OCI-LY7 (cell line): ENCODE measurements at regions of chr6 and their contacts with region 1.

Region 1: DNA sequence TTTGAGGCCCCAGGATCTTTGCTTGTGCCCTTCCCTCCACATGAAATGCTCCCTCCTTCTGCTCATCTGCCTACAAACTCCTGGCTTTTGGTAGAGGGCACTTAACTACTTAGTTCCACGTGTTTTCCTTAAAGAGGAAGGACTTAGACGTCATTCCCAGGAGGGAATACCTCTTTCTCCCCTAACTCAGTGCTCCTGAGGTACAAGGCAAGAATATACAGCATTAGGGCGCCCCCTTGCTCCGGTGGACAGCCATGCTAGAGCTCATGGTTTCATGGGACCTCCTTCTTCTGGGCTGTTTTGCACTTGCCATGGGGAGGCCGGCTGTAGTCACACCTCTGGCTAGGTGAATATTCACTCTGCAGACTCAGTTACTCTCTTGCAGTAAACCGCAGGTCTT is 93.8 kb upstream of the LY86 start:
- DNase-seq: peak; percentile 85
- H3K4me3 ChIP-seq: no peak overlapping the region
- H3K27ac ChIP-seq: peak overlapping the region; percentile 55
- H3K4me1 ChIP-seq: peaks cover 24% of the 10 kb centered on the region
- CTCF ChIP-seq: peak; percentile 99

Region 2: DNA sequence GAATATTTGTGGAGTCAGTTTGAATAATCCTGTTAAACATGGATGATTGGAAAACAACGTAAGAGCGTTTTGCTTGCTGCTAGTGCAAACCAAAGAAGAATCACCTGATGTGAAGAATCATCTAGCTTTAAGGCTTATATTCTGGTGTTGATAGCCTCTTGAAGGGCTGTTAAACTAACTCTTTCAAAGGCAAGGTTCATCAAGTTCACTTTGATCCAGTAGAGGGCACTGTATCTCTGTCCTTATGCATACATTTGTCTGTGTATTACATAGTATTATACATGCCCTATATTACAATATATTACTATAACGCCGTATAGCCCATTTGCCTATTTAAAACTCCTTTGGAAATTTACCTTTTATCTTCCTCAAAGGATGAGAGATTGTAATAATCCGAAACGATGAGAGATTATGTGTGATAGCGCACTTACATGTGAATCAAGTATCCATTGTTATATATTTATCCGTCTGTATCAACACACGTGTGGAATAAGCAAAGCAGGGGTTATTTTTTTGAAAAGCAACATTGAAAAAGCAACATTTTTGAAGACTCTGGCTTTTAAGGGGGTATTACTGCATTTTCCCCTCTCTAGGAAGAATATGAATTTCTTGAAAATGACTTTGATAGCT is 437.1 kb before region 1 on chr6:
- CTCF ChIA-PET with region 1: interaction called, 6 read pairs
- POLR2A ChIA-PET with region 1: no interaction called
- intact Hi-C with region 1: loop called (anchors 1 kb)
- DNase-seq: peak; percentile 79
- H3K4me3 ChIP-seq: no peak overlapping the region
- H3K27ac ChIP-seq: no peak overlapping the region
- H3K4me1 ChIP-seq: no peaks in the 10 kb centered on the region
- CTCF ChIP-seq: peak; percentile 92

Region 3: DNA sequence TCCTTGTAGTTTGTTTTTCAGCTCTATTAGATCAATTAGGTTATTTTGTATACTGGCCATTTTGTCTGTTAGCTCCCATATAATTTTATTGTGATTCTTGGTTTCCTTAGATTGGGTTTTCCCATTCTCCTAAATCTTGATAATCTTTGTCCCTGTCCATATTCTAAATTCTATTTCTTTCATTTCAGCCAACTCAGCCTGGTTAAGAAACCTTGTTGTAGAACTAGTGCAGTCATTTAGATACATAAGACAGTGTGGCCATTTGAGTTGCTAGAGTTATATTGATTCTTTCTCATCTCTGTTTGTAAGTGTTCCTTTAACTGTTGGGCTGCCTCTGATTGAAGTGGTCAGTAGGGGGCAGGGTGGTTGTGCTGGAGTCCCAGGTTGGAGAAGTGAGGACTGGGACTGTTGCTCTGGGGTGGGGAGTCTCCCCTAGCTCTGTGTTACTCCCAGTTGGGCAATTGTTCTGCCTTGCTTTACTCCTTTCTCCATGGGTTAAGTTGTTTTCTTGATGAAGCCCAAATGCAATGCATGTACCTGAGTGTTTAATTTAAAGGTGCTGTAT is 389.1 kb before region 1 on chr6:
- CTCF ChIA-PET with region 1: interaction called, 3 read pairs
- POLR2A ChIA-PET with region 1: interaction called, 4 read pairs
- intact Hi-C with region 1: loop called (anchors 1 kb)
- DNase-seq: peak; percentile 60
- H3K4me3 ChIP-seq: no peak overlapping the region
- H3K27ac ChIP-seq: no peak overlapping the region
- H3K4me1 ChIP-seq: no peaks in the 10 kb centered on the region
- CTCF ChIP-seq: peak; percentile 79

Region 4: DNA sequence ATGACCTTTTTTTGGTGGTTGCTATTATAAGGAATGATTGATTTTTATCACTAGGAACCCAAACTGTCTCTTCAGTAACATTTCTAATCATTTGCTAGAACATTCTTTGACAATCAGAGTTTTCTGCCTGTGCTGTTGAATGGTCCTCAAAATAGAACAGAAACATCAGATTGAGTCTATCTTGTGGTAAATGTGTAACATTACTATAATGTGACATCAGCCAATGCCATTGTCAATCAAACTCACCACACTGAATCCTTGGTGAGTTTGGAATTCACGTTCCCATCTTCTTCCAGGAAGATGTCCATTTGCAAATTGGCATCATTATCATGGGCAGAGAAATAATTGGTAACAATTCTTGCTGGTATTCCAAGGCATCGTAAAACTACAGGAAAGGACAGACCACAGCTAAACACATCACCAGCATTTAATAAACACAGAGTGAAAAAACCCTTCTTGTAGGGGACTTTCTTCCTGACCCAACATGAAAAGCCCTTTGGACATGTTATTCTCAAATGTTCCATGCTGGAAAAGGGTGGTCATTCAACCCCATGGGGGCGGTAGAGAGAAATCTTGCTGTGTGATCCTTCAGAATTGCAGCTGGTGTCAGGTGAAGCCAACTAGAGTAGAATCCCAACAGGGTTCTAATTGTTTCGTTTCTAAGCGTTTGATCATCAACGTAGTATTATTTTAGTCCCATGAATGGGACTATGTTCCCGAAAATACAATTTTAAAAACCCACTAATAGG is 272.7 kb before region 1 on chr6:
- CTCF ChIA-PET with region 1: no interaction called
- POLR2A ChIA-PET with region 1: no interaction called
- intact Hi-C with region 1: loop called (anchors 1 kb)
- DNase-seq: peak; percentile 59
- H3K4me3 ChIP-seq: no peak overlapping the region
- H3K27ac ChIP-seq: no peak overlapping the region
- H3K4me1 ChIP-seq: peaks cover 9% of the 10 kb centered on the region
- CTCF ChIP-seq: peak; percentile 77

Region 5: DNA sequence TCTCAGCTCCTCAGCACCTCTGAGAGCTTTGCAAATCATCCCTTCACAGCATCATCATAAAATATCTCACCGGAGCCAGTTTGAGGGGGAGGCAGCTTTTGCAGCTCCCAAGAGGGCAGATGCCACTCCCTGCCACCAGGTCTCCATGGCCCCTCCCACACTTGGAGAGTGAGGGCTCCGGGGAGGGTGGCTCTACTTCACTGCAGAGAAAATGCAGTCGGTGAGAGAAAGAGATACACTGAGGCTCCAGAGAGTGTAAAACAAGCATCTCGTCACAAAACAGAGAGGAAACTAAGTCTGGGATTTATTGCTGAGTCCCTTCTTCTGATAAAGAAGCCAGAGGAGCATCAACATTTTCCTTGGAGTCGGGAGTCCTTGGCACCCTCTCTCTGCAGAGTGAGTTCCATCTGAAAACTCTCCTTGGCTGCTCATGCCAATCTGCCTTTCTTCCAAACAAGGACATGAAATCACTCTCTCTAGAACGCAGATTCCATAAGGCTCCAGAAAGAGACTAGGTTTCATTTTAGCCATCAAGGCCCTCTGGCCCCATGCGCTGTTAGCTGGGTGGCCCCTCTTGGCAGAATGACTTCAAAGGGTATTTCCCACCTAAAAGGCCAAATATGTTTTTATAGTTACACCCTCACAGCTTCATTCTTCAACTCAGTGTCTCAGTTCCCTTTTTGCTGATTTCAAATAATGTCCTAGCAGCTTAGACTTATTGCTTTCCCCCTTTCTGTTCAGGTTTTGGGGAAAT is 103.7 kb before region 1 on chr6:
- CTCF ChIA-PET with region 1: interaction called, 3 read pairs
- POLR2A ChIA-PET with region 1: interaction called, 3 read pairs
- intact Hi-C with region 1: loop called (anchors 5 kb)
- DNase-seq: peak; percentile 90
- H3K4me3 ChIP-seq: peak overlapping the region; percentile 61
- H3K27ac ChIP-seq: peak overlapping the region; percentile 92
- H3K4me1 ChIP-seq: peaks cover 100% of the 10 kb centered on the region
- CTCF ChIP-seq: no peak

Region 6: GRCh38 chr6:6547110-6547879 is 52.6 kb after region 1 on chr6:
- CTCF ChIA-PET with region 1: no interaction called
- POLR2A ChIA-PET with region 1: interaction called, 5 read pairs
- intact Hi-C with region 1: loop called (anchors 2 kb)
- DNase-seq: peak; percentile 87
- H3K4me3 ChIP-seq: peak overlapping the region; percentile 37
- H3K27ac ChIP-seq: no peak overlapping the region
- H3K4me1 ChIP-seq: peaks cover 20% of the 10 kb centered on the region
- CTCF ChIP-seq: peak; percentile 97

Region 7: DNA sequence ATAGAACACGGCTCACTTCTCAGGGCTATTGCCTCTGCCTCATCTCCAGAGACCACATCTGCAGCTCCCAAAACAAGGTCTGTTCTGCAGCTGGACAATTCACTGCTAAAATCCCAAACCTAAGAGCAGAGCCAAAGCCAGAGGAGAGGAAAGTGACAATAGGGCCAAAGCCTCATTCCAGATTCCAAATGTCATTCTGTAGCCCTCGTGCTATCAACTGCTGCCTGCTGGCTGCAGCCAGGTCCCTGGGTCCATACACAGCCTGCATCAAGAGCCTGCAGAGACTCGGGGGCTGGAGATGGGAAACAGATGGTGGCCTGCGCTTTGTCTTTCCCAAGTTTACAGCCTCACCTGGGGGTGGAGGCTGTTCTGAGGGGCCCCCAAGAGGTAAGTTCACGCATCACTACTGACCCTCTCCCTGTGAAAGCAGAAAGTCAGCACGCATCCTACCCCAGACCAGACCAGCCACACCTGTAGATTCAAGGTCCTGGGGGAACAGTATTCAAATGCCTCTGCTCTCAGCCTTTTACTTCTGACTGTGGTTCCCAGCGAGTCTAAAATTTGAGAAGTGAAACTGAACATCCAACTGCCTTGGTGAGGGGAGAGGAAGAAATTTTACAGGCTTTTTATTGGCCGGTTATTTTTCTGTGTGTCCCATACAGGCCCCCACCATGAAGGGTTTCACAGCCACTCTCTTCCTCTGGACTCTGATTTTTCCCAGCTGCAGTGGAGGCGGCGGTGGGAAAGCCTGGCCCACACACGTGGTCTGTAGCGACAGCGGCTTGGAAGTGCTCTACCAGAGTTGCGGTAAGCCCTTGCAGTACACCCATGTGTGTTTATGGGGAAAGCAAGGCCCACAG is 93.6 kb after region 1 on chr6 and contains the start of gene LY86:
- CTCF ChIA-PET with region 1: no interaction called
- POLR2A ChIA-PET with region 1: no interaction called
- intact Hi-C with region 1: no loop called
- DNase-seq: peak; percentile 94
- H3K4me3 ChIP-seq: peak within 1 kb of the TSS; percentile 76
- H3K27ac ChIP-seq: peak within 1 kb of the TSS; percentile 96
- H3K4me1 ChIP-seq: peaks cover 78% of the 10 kb centered on the region
- CTCF ChIP-seq: peak; percentile 68
- total RNA-seq, gene LY86: 48.4 and 49.2 TPM in 2 replicates

Region 8: DNA sequence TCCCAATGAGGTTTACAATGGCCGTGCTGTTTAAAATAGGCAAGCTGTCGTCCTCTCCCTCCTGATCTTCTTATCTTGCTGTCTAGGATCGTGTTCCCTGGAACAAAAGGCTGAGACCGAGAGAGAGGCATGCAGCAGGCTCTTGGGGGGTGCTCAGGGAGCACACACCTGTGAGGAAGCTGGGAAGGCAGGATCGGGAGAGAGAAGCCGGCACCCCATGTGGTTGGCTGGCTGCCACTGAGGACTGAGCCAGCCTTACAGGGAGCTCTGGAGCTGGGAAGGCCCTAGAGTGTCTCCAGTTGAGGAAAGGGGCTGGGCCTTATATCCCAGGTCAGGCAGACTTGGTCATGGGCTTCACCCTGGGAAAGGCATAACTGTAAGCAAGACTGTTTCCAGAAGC is 278.1 kb after region 1 on chr6:
- CTCF ChIA-PET with region 1: no interaction called
- POLR2A ChIA-PET with region 1: no interaction called
- intact Hi-C with region 1: no loop called
- DNase-seq: no peak
- H3K4me3 ChIP-seq: no peak overlapping the region
- H3K27ac ChIP-seq: no peak overlapping the region
- H3K4me1 ChIP-seq: no peaks in the 10 kb centered on the region
- CTCF ChIP-seq: no peak

Region 9: DNA sequence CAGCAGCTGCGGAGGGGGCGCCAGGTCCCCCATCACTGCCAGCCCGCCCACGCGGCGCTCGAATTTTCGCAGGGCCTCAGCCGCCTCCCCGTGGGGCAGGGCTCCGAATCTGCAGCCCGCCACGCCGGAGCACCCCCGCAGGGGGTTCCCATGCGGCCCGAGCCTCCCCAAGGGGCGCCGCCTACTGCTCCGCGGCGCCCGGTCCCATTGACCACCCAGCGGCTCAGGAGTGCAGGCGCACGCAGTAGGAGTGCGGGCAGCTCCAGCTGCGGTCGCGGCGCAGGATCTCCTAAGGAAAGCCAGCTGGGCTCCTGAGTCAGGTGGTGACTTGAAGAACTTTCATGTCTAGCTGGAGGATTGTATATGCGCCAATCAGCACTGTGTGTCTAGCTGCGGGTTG is 457.8 kb after region 1 on chr6:
- CTCF ChIA-PET with region 1: no interaction called
- POLR2A ChIA-PET with region 1: no interaction called
- intact Hi-C with region 1: no loop called
- DNase-seq: no peak
- H3K4me3 ChIP-seq: no peak overlapping the region
- H3K27ac ChIP-seq: no peak overlapping the region
- H3K4me1 ChIP-seq: no peaks in the 10 kb centered on the region
- CTCF ChIP-seq: no peak